ENCODE measurements at regions of chr16 and their contacts with region 1.

Region 1: GRCh38 chr16:21584817-21585216 is 14.6 kb upstream of the METTL9 start:
- DNase-seq: no peak
- ATAC-seq: no peak
- H3K4me3 ChIP-seq: no peak overlapping the region
- H3K4me3 Mint-ChIP-seq: no peak overlapping the region
- H3K27ac ChIP-seq: no peak overlapping the region
- H3K27ac Mint-ChIP-seq: no peak overlapping the region
- H3K4me1 ChIP-seq: no peaks in the 10 kb centered on the region
- H3K4me1 Mint-ChIP-seq: peaks cover 2% of the 10 kb centered on the region
- H3K27me3 ChIP-seq: no peaks in the 10 kb centered on the region
- H3K27me3 Mint-ChIP-seq: no peaks in the 10 kb centered on the region
- CTCF ChIP-seq: no peak

Region 2: DNA sequence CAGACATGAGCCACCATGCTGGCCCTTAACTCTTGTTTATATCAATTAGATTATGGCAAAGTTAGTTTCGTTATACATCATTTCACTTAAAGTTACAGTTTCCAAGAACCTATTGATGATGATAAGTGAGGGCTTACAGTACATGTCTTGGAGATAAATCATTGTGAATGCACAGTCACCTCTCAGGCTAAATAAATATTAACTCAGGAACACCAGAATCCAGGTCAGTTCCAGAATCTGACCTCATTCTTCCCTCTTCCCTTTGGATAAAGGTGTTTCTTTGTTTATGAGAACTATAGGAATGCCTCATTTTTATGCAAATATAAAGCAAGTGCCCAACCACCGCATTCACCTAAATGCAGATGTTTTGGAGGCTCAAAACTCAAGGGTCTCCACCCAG is 258.4 kb before region 1 on chr16:
- CTCF ChIA-PET with region 1: no interaction called
- POLR2A ChIA-PET with region 1: no interaction called
- intact Hi-C with region 1: no loop called
- DNase-seq: no peak
- ATAC-seq: no peak
- H3K4me3 ChIP-seq: no peak overlapping the region
- H3K4me3 Mint-ChIP-seq: no peak overlapping the region
- H3K27ac ChIP-seq: no peak overlapping the region
- H3K27ac Mint-ChIP-seq: no peak overlapping the region
- H3K4me1 ChIP-seq: no peaks in the 10 kb centered on the region
- H3K4me1 Mint-ChIP-seq: no peaks in the 10 kb centered on the region
- H3K27me3 ChIP-seq: no peaks in the 10 kb centered on the region
- H3K27me3 Mint-ChIP-seq: peaks cover 6% of the 10 kb centered on the region
- CTCF ChIP-seq: no peak

Region 3: GRCh38 chr16:21611546-21612384 is 26.9 kb after region 1 on chr16:
- CTCF ChIA-PET with region 1: interaction called, 6 read pairs
- POLR2A ChIA-PET with region 1: no interaction called
- intact Hi-C with region 1: loop called in 1 of 2 experiments (anchors 2 kb)
- DNase-seq: peak in 1 of 9 experiments; percentile 35
- ATAC-seq: peak; percentile 71
- H3K4me3 ChIP-seq: no peak overlapping the region
- H3K4me3 Mint-ChIP-seq: peak overlapping the region; percentile 19
- H3K27ac ChIP-seq: no peak overlapping the region
- H3K27ac Mint-ChIP-seq: peak overlapping the region; percentile 3
- H3K4me1 ChIP-seq: peaks cover 70% of the 10 kb centered on the region
- H3K4me1 Mint-ChIP-seq: peaks cover 82% of the 10 kb centered on the region
- H3K27me3 ChIP-seq: no peaks in the 10 kb centered on the region
- H3K27me3 Mint-ChIP-seq: no peaks in the 10 kb centered on the region
- CTCF ChIP-seq: no peak

Region 4: DNA sequence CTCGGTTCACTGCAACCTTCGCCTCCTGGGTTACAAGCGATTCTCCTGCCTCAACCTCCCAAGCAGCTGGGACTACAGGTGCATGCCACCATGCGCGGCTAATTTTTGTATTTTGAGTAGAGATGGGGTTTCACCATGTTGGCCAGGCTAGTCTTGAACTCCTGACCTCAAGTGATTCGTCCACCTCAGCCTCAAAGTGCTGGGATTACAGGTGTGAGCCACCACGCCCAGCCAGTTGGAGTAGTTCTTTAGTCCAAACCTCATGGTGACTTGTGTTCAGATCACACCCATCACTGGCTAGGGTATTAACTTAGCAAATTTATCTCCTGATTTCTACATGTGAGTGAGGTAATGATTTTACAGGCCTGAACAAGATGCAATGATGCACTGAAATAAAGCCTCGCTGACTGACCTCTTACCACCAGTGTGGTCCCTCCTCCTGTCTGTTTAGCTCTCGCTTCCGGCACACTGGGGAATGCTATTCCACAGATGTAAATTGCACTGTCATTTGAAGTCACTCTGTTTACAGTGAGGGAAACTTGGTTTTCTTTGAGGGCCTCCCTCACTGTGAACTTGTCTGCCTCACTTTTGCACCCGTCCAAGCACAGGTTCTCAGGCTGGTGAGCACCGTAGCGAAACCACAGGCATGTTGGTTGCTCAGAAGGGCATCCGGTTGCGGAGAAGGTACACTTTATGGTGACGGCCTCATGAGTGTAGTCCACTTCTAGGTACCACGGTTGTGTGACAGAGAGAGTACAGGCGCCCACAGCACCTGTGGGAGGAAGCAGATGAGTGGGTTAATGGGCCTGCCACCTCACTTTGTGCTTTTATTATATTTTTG is 62.1 kb after region 1 on chr16:
- CTCF ChIA-PET with region 1: interaction called, 191 read pairs
- POLR2A ChIA-PET with region 1: interaction called, 3 read pairs
- intact Hi-C with region 1: no loop called
- DNase-seq: peak; percentile 42 to 90 (median 71)
- ATAC-seq: peak; percentile 78
- H3K4me3 ChIP-seq: peak overlapping the region in 1 of 2 experiments; percentile 9
- H3K4me3 Mint-ChIP-seq: peak overlapping the region; percentile 74
- H3K27ac ChIP-seq: peak overlapping the region; percentile 58 to 85
- H3K27ac Mint-ChIP-seq: peak overlapping the region; percentile 95
- H3K4me1 ChIP-seq: peaks cover 51% of the 10 kb centered on the region
- H3K4me1 Mint-ChIP-seq: peaks cover 55% of the 10 kb centered on the region
- H3K27me3 ChIP-seq: no peaks in the 10 kb centered on the region
- H3K27me3 Mint-ChIP-seq: no peaks in the 10 kb centered on the region
- CTCF ChIP-seq: no peak

Region 5: DNA sequence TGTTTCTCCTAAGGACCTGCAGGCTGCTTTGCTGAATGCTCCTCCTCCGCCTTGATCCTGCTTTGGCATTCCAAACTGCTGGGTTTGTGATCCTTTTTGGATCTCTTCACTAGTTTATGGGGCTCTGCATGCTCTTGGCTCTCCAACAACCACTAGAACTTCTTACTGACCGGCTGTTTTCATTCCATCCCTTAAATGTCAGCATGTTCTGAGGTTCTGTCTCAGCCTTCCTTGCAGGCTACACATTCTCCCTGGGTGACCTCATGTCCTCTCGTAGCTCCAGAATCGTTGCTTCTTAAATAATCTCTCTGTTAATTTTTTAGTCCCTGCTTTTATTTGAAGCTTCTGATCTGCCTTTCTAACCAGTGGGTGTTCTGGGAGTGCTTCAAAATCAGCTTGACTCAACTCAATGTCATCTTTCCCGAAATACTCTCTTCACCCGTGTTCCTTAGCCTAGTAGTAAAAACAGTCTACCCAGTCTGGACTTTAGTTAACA is 1110.1 kb after region 1 on chr16:
- CTCF ChIA-PET with region 1: no interaction called
- POLR2A ChIA-PET with region 1: no interaction called
- intact Hi-C with region 1: loop called in 1 of 2 experiments (anchors 1 kb)
- DNase-seq: no peak
- ATAC-seq: no peak
- H3K4me3 ChIP-seq: no peak overlapping the region
- H3K4me3 Mint-ChIP-seq: no peak overlapping the region
- H3K27ac ChIP-seq: no peak overlapping the region
- H3K27ac Mint-ChIP-seq: no peak overlapping the region
- H3K4me1 ChIP-seq: no peaks in the 10 kb centered on the region
- H3K4me1 Mint-ChIP-seq: no peaks in the 10 kb centered on the region
- H3K27me3 ChIP-seq: no peaks in the 10 kb centered on the region
- H3K27me3 Mint-ChIP-seq: peaks cover 21% of the 10 kb centered on the region
- CTCF ChIP-seq: no peak

Measured in CD8-positive, alpha-beta T cell (primary cell).